Mammary epithelial cell (primary cell): ENCODE measurements at regions of chr15 and their contacts with region 1.

Region 1: DNA sequence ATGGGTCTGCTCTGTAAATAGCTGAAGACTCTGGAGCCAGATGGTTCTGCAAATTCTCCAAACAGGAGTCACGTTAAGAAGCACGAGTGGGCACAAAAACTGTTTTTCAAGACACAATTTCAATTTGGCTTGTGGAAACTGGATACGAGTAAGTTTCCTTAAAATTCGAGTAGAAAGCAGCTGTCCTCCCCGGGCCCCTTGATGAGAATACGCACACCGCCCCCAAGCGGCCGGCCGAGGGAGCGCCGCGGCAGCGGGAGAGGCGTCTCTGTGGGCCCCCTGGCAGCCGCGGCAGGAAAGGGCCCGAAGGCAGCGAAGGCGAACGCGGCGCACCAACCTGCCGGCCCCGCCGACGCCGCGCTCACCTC is 778 bp upstream of the THBS1 start:
- DNase-seq: peak; percentile 92
- H3K4me3 ChIP-seq: peak overlapping the region; percentile 51 to 67 (median 62)
- H3K27ac ChIP-seq: peak overlapping the region; percentile 92
- H3K4me1 ChIP-seq: peaks cover 25% of the 10 kb centered on the region
- H3K27me3 ChIP-seq: no peaks in the 10 kb centered on the region
- CTCF ChIP-seq: peak; percentile 77 to 92

Region 2: DNA sequence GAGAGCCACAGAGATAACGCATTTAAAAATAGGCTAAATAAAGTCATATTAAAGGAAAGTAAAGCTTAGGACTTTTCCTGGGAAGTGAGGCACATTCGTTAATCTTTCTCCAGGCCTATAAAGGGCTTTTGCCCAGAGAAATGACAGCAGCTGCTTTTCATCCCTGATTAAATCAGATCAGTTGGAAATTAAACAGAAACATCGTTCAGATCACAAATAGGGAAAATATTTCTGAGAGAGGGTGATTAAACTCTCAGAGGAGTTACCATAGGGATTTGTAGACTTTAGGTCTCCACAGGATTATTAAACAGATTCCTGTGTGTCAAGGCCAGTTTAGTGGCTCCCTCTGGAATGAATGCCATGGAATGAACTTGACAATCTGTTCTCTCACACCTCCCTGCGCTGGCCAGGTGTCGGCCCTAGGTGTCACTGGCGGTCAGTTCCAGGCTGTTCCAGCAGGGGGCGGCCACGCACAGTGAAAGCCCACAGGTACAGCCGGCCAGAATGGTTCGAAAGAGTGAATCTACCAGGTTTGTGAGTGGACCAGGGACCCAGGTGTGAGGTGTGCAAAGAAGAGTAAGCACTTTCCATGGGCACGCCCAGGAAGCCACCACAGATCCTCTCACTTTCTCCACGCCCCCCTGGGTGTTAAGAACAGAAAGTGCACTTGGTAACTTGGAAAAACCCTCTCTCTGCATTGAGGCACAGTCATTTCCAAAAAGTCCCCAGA is 762.5 kb before region 1 on chr15:
- CTCF ChIA-PET with region 1: no interaction called
- dilution Hi-C with region 1: no loop called
- in situ Hi-C with region 1: loop called in 1 of 2 experiments (anchors 5 kb)
- intact Hi-C with region 1: loop called (anchors 1 kb)
- DNase-seq: peak; percentile 81
- H3K4me3 ChIP-seq: no peak overlapping the region
- H3K27ac ChIP-seq: no peak overlapping the region
- H3K4me1 ChIP-seq: peaks cover 6% of the 10 kb centered on the region
- H3K27me3 ChIP-seq: no peaks in the 10 kb centered on the region
- CTCF ChIP-seq: peak; percentile 99 to 100

Region 3: DNA sequence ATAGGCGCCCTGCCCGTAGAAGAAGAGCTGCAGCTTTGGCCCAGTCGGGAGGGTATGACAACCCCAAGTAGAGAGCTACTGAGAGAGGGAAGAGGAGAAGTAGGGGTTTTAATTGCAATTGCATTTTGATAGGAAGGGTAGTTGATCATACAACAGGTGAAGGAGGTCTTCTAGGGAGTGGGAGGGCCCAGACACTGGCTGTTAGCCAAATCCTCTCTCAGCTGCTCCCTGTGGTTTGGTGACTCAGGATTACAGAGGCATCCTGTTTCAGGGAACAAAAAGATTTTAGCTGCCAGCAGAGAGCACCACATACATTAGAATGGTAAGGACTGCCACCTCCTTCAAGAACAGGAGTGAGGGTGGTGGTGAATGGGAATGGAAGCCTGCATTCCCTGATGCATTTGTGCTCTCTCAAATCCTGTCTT is 408.1 kb before region 1 on chr15:
- CTCF ChIA-PET with region 1: interaction called, 7 read pairs
- dilution Hi-C with region 1: no loop called
- in situ Hi-C with region 1: loop called (anchors 5 kb)
- intact Hi-C with region 1: loop called (anchors 1 kb)
- DNase-seq: peak; percentile 97
- H3K4me3 ChIP-seq: no peak overlapping the region
- H3K27ac ChIP-seq: peak overlapping the region; percentile 95
- H3K4me1 ChIP-seq: peaks cover 33% of the 10 kb centered on the region
- H3K27me3 ChIP-seq: no peaks in the 10 kb centered on the region
- CTCF ChIP-seq: peak; percentile 37 to 67

Region 4: DNA sequence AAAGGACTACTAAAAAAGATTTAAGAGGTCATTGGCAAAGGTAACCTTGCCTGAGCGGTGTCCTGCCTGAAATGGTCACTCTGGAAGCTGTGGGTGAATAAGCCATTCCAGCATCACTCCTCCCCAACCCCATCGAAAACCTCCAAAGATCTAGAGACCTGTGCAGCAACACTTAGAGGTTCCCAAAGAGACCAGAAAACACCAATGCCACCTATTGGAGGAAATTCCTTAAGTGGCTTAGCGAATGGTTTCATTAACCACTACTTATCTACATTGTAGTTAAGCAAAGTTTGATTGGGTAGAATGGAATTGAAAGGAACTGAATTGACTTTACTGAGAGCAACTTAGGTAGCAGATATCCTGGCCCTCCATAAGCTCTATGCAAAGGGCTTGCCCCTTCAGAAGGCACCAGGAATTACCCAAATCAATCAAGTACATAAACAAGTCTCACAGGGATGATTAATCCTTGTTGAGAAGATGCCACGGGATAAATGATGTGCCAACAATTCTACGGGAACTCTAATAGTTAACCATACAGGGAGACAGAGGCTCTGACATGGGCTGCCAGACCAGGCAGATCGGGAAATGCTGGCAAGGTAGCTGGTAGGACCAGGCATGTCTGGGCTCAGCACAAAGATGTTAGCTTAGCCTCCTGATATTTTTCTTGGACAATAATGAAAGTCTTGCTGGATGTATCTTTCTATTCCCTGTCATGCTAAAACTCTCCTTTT is 248.7 kb before region 1 on chr15:
- CTCF ChIA-PET with region 1: no interaction called
- dilution Hi-C with region 1: no loop called
- in situ Hi-C with region 1: no loop called
- intact Hi-C with region 1: loop called (anchors 1 kb)
- DNase-seq: peak; percentile 80
- H3K4me3 ChIP-seq: no peak overlapping the region
- H3K27ac ChIP-seq: no peak overlapping the region
- H3K4me1 ChIP-seq: peaks cover 25% of the 10 kb centered on the region
- H3K27me3 ChIP-seq: no peaks in the 10 kb centered on the region
- CTCF ChIP-seq: no peak

Region 5: GRCh38 chr15:39495871-39496840 is 83.9 kb before region 1 on chr15:
- CTCF ChIA-PET with region 1: interaction called, 10 read pairs
- dilution Hi-C with region 1: no loop called
- in situ Hi-C with region 1: no loop called
- intact Hi-C with region 1: no loop called
- DNase-seq: peak; percentile 44
- H3K4me3 ChIP-seq: no peak overlapping the region
- H3K27ac ChIP-seq: no peak overlapping the region
- H3K4me1 ChIP-seq: peaks cover 17% of the 10 kb centered on the region
- H3K27me3 ChIP-seq: no peaks in the 10 kb centered on the region
- CTCF ChIP-seq: no peak

Region 6: DNA sequence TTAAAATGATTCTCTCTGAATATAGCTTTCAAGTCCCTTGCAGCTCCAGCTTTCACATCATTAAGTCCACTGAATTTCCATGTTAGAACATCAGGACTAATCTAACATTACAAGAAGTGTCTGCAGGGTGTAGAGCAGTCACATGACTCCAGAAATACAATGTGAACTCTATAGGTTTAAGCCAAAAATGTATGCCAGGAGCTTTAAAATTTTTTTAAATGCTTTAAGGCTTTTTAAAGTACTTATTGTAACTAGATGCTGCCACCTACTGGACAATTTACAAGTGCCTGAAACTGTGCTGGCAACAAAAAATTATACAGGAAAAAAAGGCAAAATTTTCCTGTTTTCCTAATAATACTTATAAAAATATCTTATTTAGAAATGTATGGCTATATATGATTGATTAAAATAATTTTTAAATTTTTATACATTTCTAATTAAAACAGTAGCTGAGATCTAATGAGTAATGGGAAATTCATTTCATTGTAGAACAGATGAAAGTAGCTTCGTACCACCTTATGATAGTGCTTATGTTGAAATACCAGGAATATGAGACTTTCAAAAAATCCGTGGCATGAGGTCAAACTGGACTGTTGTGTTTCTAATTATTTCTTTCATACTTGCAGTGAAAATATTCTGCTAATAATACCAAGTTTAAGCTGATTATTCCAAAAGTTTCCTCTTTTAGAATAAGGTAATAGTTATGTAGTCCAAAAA is 176.9 kb after region 1 on chr15:
- CTCF ChIA-PET with region 1: interaction called, 7 read pairs
- dilution Hi-C with region 1: no loop called
- in situ Hi-C with region 1: loop called (anchors 10 kb)
- intact Hi-C with region 1: loop called (anchors 1 kb)
- DNase-seq: peak; percentile 18
- H3K4me3 ChIP-seq: no peak overlapping the region
- H3K27ac ChIP-seq: no peak overlapping the region
- H3K4me1 ChIP-seq: no peaks in the 10 kb centered on the region
- H3K27me3 ChIP-seq: no peaks in the 10 kb centered on the region
- CTCF ChIP-seq: peak; percentile 64 to 65